ENCODE measurements at regions of chr4 and their contacts with region 1.

Region 1: GRCh38 chr4:138680989-138681604 is 334.5 kb upstream of the NOCT start:
- DNase-seq: peak; percentile 88
- H3K4me3 Mint-ChIP-seq: no peak overlapping the region
- H3K27ac Mint-ChIP-seq: no peak overlapping the region
- H3K4me1 Mint-ChIP-seq: peaks cover 6% of the 10 kb centered on the region
- H3K27me3 Mint-ChIP-seq: peaks cover 10% of the 10 kb centered on the region
- CTCF ChIP-seq: peak; percentile 78

Region 2: DNA sequence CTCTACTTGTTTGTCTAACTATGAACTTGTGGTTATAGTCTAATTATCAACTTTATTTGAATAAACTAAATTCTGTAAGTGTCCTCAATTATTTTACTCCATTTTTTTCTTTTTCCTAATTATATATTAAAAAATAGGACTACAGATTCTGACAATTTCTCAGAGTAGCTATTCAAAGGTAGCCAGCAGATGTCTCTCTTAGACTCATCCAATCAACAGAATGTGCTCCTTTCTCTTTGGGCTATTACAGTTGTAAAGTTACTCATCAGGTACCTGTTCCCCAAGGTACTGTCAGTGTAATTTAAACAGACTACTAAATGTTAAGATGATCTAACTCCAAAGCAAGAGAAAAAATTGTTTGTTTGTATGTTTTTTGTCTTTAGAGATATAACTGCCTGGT is 1397.4 kb before region 1 on chr4:
- CTCF ChIA-PET with region 1: interaction called, 3 read pairs
- POLR2A ChIA-PET with region 1: no interaction called
- intact Hi-C with region 1: loop called (anchors 10 kb)
- DNase-seq: peak; percentile 14
- H3K4me3 Mint-ChIP-seq: no peak overlapping the region
- H3K27ac Mint-ChIP-seq: no peak overlapping the region
- H3K4me1 Mint-ChIP-seq: peaks cover 12% of the 10 kb centered on the region
- H3K27me3 Mint-ChIP-seq: no peaks in the 10 kb centered on the region
- CTCF ChIP-seq: peak; percentile 47

Region 3: DNA sequence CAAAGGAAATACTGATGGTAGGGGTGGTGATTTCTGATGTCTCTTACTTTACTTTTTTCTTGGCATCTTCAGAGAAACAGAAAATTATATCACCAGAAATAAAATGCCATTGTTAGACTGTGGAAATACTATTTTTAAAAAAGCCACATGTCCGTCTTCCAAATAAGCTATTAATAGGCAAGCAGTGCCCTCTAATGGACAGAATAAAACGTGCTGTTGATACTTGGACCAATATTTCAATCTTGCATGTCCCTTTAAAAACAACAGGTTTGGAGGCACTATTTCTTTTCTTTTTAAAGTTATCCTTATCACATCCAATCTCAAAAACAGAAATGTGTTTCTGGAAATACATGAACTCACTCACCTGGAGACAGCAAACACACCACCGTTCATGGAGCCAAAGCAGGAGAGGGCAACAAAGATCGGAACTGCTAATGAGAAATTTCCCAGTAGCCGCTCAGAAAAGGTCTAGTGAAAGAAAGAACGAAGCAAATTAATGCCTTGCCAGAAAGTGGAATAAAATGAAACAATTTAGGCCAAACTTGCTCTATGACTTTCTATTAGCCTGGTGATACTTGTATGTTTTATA is 498.2 kb before region 1 on chr4:
- CTCF ChIA-PET with region 1: interaction called, 10 read pairs
- POLR2A ChIA-PET with region 1: no interaction called
- intact Hi-C with region 1: no loop called
- DNase-seq: peak; percentile 54
- H3K4me3 Mint-ChIP-seq: no peak overlapping the region
- H3K27ac Mint-ChIP-seq: no peak overlapping the region
- H3K4me1 Mint-ChIP-seq: peaks cover 5% of the 10 kb centered on the region
- H3K27me3 Mint-ChIP-seq: no peaks in the 10 kb centered on the region
- CTCF ChIP-seq: peak; percentile 39

Region 4: GRCh38 chr4:138576684-138577083 is 104.4 kb before region 1 on chr4:
- CTCF ChIA-PET with region 1: interaction called, 19 read pairs
- POLR2A ChIA-PET with region 1: no interaction called
- intact Hi-C with region 1: loop called (anchors 1 kb)
- DNase-seq: peak; percentile 58
- H3K4me3 Mint-ChIP-seq: no peak overlapping the region
- H3K27ac Mint-ChIP-seq: no peak overlapping the region
- H3K4me1 Mint-ChIP-seq: no peaks in the 10 kb centered on the region
- H3K27me3 Mint-ChIP-seq: no peaks in the 10 kb centered on the region
- CTCF ChIP-seq: peak; percentile 51

Region 5: DNA sequence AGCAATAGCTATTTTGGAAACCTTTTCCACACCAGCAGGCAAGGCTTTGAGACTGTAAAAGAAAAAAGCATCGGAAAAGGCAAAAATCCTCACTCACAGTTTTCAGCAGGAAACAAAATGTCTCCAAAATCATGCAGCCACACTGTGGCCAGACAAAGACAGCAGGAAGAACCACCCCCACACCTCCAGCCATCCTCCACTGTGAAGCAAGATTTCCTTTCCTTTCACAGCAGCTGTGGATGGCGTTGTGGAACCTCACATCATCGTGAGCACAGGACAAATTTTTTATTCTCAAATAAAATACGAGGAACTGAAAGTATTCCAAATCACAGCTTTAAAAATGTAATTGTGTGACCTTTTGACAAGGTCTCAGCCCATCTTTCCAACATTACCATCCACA is 17.2 kb before region 1 on chr4:
- CTCF ChIA-PET with region 1: interaction called, 14 read pairs
- POLR2A ChIA-PET with region 1: no interaction called
- intact Hi-C with region 1: no loop called
- DNase-seq: no peak
- H3K4me3 Mint-ChIP-seq: no peak overlapping the region
- H3K27ac Mint-ChIP-seq: no peak overlapping the region
- H3K4me1 Mint-ChIP-seq: no peaks in the 10 kb centered on the region
- H3K27me3 Mint-ChIP-seq: no peaks in the 10 kb centered on the region
- CTCF ChIP-seq: no peak

Region 6: DNA sequence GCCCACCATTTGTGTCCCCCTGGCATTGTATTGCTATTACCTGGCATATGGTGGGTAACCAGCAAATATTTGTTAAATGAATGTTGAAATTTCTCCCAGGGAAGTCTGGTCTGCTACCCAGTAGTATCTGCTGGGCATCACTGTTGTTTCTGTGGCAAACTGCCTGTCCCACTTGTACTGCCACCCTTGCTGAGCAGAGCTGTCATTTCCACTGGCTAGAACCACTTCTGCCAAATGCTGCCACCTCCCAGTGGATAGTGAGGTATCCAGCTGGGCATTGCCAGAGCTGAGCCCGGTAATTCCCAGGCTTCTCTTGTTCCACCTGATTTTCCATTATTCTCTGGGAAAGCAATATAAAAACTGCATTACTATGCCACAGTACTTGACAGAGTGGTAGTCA is 147.8 kb after region 1 on chr4:
- CTCF ChIA-PET with region 1: no interaction called
- POLR2A ChIA-PET with region 1: no interaction called
- intact Hi-C with region 1: no loop called
- DNase-seq: no peak
- H3K4me3 Mint-ChIP-seq: no peak overlapping the region
- H3K27ac Mint-ChIP-seq: no peak overlapping the region
- H3K4me1 Mint-ChIP-seq: no peaks in the 10 kb centered on the region
- H3K27me3 Mint-ChIP-seq: no peaks in the 10 kb centered on the region
- CTCF ChIP-seq: no peak

Region 7: DNA sequence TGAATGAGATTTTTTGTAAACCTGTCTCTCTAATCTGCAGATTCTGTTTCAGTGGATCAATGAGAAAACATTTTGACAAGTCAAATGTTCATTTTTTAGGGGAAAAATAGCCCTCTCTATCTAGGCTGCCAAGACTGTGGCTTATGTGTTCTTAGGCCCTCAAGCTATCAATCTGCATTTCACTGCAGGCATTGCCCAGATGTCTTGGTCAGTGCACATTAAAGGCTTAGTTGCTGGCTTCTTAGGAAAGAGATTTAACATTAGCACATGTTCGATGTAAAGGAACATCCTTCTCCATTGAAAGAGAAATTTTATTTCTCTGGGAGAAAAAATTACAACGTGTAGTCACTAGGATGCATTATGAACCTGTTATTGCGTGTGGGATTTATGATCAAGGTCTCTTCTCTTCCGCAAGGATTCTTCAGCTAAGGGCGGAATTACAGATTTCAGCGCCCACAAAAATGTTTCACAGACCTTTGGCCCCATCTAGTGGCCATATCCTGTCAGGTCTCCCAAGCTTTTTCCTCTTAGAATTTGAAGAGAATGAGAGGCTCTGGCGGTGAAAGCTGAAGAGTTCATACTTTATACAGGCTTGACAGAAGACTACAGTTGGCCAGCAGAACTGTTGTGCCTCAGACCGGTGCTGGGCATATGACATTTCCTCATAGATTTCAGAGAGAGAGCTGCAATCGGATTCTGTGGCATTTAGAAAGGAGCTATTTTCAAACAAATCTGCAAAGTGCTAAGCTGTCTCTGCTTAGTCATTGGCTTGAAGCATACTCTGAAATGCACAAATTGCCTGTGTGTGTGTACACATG is 189.8 kb after region 1 on chr4:
- CTCF ChIA-PET with region 1: interaction called, 23 read pairs
- POLR2A ChIA-PET with region 1: interaction called, 4 read pairs
- intact Hi-C with region 1: loop called (anchors 1 kb)
- DNase-seq: peak; percentile 81
- H3K4me3 Mint-ChIP-seq: no peak overlapping the region
- H3K27ac Mint-ChIP-seq: no peak overlapping the region
- H3K4me1 Mint-ChIP-seq: peaks cover 11% of the 10 kb centered on the region
- H3K27me3 Mint-ChIP-seq: no peaks in the 10 kb centered on the region
- CTCF ChIP-seq: peak; percentile 78

Region 8: GRCh38 chr4:138938366-138938690 is 257.2 kb after region 1 on chr4:
- CTCF ChIA-PET with region 1: interaction called, 4 read pairs
- POLR2A ChIA-PET with region 1: no interaction called
- intact Hi-C with region 1: loop called (anchors 1 kb)
- DNase-seq: peak; percentile 58
- H3K4me3 Mint-ChIP-seq: no peak overlapping the region
- H3K27ac Mint-ChIP-seq: no peak overlapping the region
- H3K4me1 Mint-ChIP-seq: no peaks in the 10 kb centered on the region
- H3K27me3 Mint-ChIP-seq: no peaks in the 10 kb centered on the region
- CTCF ChIP-seq: peak; percentile 55

Region 9: GRCh38 chr4:140556372-140557085 is 1875.4 kb after region 1 on chr4:
- CTCF ChIA-PET with region 1: no interaction called
- POLR2A ChIA-PET with region 1: no interaction called
- intact Hi-C with region 1: no loop called
- DNase-seq: no peak
- H3K4me3 Mint-ChIP-seq: no peak overlapping the region
- H3K27ac Mint-ChIP-seq: no peak overlapping the region
- H3K4me1 Mint-ChIP-seq: no peaks in the 10 kb centered on the region
- H3K27me3 Mint-ChIP-seq: no peaks in the 10 kb centered on the region
- CTCF ChIP-seq: no peak

Measured in MCF 10A (cell line).